Sigmoid colon (tissue), 7 donors: ENCODE measurements at regions of chr7 and their contacts with region 1.

Region 1: DNA sequence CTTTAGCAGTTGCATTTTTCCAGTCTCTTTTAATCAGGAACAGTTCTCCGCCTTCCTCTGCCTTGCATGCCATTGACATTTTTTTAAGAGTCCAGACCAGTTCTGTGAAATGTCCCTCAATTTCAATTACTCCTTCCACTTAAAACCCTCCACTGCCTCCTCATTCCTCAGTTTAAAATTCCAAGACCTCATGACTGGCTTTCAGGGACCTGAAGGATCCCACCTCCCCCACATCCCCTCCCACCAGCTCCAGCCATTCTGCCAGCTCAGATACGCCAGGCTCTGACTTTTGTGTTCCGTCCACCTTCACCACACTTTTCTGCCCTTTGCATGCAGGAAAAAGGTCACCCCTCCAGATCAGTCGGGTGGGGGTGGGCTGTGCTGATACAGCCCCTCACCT is 8.7 kb downstream of the TNRC18 start:
- DNase-seq: no peak
- H3K4me3 ChIP-seq: no peak overlapping the region
- H3K27ac ChIP-seq: peak overlapping the region; percentile 97 to 100 (median 100)
- H3K4me1 ChIP-seq: peaks cover 0 to 67% (median 47%) of the 10 kb centered on the region in 4 donors
- H3K27me3 ChIP-seq: no peaks in the 10 kb centered on the region
- CTCF ChIP-seq: no peak
- EP300 ChIP-seq: no peak
- POLR2A ChIP-seq: no peak

Region 2: DNA sequence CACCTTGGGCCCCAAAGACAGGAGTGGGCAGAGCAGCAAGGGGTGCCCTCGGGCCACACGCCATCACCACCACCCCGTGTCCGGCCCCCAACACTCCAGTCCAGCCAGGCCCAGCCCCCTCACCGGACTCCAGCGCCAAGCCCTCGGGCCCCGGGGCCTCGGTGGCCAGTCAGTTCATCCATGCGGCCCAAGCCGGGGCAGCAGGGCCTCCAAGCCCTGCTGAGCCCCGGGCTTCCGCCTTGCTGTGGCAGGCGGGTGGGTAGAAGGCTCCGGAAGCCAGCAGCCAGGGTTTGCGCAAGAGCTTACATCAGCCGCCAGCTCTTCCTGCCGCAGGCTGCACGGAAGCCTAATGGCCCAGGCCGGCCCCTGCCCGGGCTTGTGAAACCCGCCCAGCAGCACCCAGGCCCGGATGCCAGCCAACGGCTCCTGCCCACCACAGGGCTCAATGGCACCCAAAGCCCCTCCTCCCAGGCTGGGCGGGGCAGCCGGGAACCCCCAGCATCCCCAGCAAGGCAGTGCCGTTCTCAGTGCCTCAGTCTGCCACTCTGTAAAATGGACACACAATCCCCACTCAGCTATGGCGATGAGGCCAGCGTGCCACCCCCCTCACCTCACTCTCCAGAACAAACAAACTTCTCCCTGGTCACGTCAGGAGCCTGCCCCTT is 17.8 kb before region 1 on chr7:
- intact Hi-C with region 1: loop called (anchors 2 kb)
- DNase-seq: peak; percentile 94
- H3K4me3 ChIP-seq: peak overlapping the region in 3 of 4 donors; percentile 27 to 36 (median 33)
- H3K27ac ChIP-seq: peak overlapping the region; percentile 78 to 85 (median 80)
- H3K4me1 ChIP-seq: peaks cover 0 to 60% (median 54%) of the 10 kb centered on the region in 4 donors
- H3K27me3 ChIP-seq: no peaks in the 10 kb centered on the region
- CTCF ChIP-seq: no peak
- EP300 ChIP-seq: peak in 1 of 4 donors; percentile 22
- POLR2A ChIP-seq: no peak